ENCODE measurements at regions of chr7 and their contacts with region 1.

Region 1: GRCh38 chr7:25565949-25566348 is 337.7 kb upstream of the NPVF start:
- DNase-seq: peak in 2 of 3 donors; percentile 74 to 84
- ATAC-seq: peak; percentile 50
- H3K4me3 ChIP-seq: no peak overlapping the region
- H3K4me1 ChIP-seq: no peaks in the 10 kb centered on the region
- CTCF ChIP-seq: peak; percentile 97

Region 2: DNA sequence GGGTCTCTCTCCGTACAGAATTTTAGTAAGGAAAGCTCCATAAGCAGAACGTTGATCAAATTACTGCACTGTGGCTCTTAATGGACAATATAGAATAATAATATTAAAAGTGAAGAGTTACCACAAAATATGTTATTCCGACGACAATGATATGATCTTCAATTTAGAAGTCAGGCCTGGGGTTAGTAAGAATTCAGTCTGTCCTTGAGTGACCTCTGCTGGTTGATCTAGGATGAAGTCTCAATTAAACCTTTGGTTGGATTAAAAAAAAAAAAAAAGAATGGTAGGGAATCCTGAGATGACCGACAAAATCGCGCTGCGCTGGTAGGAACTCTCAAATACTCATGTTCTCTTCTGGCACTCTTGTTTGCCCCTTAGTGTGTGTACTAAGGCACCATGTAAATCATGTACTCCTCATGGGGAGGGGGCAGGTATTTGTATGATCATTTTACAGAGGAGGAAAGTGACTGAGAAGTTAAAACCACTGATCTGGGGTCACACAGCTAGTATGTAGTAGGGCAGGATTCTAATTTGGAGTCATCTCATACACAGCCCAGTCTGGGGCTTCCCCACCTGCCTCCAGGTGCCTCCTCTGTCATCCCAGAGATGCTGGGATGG is 176.4 kb before region 1 on chr7:
- intact Hi-C with region 1: loop called (anchors 5 kb)
- DNase-seq: peak in 1 of 3 donors; percentile 73
- ATAC-seq: peak; percentile 79
- H3K4me3 ChIP-seq: no peak overlapping the region
- H3K4me1 ChIP-seq: no peaks in the 10 kb centered on the region
- CTCF ChIP-seq: no peak